A673 (cell line): ENCODE measurements at regions of chr17 and their contacts with region 1.

Region 1: GRCh38 chr17:63491976-63492618 is 15.2 kb downstream of the ACE start:
- DNase-seq: no peak
- H3K4me3 ChIP-seq: no peak overlapping the region
- H3K27ac ChIP-seq: no peak overlapping the region
- H3K4me1 ChIP-seq: no peaks in the 10 kb centered on the region
- H3K27me3 ChIP-seq: no peaks in the 10 kb centered on the region
- CTCF ChIP-seq: no peak

Region 2: GRCh38 chr17:62806343-62807138 is 685.6 kb before region 1 on chr17:
- CTCF ChIA-PET with region 1: no interaction called
- POLR2A ChIA-PET with region 1: interaction called, 12 read pairs
- intact Hi-C with region 1: no loop called
- DNase-seq: no peak
- H3K4me3 ChIP-seq: no peak overlapping the region
- H3K27ac ChIP-seq: no peak overlapping the region
- H3K4me1 ChIP-seq: no peaks in the 10 kb centered on the region
- H3K27me3 ChIP-seq: peaks cover 3% of the 10 kb centered on the region
- CTCF ChIP-seq: no peak

Region 3: GRCh38 chr17:63140255-63140654 is 351.8 kb before region 1 on chr17:
- CTCF ChIA-PET with region 1: no interaction called
- POLR2A ChIA-PET with region 1: no interaction called
- intact Hi-C with region 1: no loop called
- DNase-seq: peak; percentile 36
- H3K4me3 ChIP-seq: no peak overlapping the region
- H3K27ac ChIP-seq: no peak overlapping the region
- H3K4me1 ChIP-seq: no peaks in the 10 kb centered on the region
- H3K27me3 ChIP-seq: no peaks in the 10 kb centered on the region
- CTCF ChIP-seq: no peak

Region 4: GRCh38 chr17:63419949-63420867 is 71.9 kb before region 1 on chr17:
- CTCF ChIA-PET with region 1: no interaction called
- POLR2A ChIA-PET with region 1: no interaction called
- intact Hi-C with region 1: no loop called
- DNase-seq: no peak
- H3K4me3 ChIP-seq: no peak overlapping the region
- H3K27ac ChIP-seq: no peak overlapping the region
- H3K4me1 ChIP-seq: no peaks in the 10 kb centered on the region
- H3K27me3 ChIP-seq: no peaks in the 10 kb centered on the region
- CTCF ChIP-seq: no peak

Region 5: GRCh38 chr17:63503334-63503692 is 11.2 kb after region 1 on chr17:
- CTCF ChIA-PET with region 1: no interaction called
- POLR2A ChIA-PET with region 1: interaction called, 12 read pairs
- intact Hi-C with region 1: no loop called
- DNase-seq: no peak
- H3K4me3 ChIP-seq: no peak overlapping the region
- H3K27ac ChIP-seq: no peak overlapping the region
- H3K4me1 ChIP-seq: no peaks in the 10 kb centered on the region
- H3K27me3 ChIP-seq: peaks cover 19% of the 10 kb centered on the region
- CTCF ChIP-seq: no peak

Region 6: DNA sequence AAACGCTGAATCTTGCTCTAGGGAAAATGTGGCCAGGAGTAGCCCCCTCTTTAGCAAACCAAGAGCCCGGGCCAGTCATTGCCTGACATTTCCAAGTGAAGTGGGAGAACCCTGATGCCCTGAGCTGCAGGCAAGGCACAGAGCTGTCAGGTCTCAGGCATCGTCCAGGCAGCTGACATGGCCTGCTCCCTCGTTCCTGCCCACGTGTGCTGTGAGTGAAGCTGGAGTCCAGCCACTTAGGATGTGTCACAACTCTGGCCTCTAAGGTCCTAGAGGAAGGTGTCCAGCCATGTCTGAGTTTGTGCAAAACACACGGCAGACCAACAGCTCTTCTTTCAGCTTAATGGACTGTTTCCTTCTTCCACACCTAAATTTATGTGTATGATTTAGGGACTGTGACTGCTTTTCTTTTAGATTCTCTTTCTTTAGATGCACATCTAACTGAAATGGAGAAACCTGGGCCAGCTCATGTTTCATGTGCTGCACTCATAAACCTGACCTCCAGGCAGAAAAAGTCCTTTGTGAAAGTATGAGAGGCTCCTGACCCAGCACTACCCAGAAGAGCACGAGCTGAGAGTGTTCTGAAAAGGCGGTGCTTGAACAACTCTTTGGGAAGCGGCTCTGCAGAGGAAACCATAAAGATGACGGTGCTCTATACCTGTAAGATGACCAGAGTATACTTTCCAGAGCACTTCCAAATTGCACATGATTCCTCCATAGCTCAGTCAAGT is 222.6 kb after region 1 on chr17:
- CTCF ChIA-PET with region 1: no interaction called
- POLR2A ChIA-PET with region 1: no interaction called
- intact Hi-C with region 1: no loop called
- DNase-seq: no peak
- H3K4me3 ChIP-seq: no peak overlapping the region
- H3K27ac ChIP-seq: no peak overlapping the region
- H3K4me1 ChIP-seq: no peaks in the 10 kb centered on the region
- H3K27me3 ChIP-seq: no peaks in the 10 kb centered on the region
- CTCF ChIP-seq: no peak